ENCODE measurements at regions of chr11 and their contacts with region 1.

Region 1: DNA sequence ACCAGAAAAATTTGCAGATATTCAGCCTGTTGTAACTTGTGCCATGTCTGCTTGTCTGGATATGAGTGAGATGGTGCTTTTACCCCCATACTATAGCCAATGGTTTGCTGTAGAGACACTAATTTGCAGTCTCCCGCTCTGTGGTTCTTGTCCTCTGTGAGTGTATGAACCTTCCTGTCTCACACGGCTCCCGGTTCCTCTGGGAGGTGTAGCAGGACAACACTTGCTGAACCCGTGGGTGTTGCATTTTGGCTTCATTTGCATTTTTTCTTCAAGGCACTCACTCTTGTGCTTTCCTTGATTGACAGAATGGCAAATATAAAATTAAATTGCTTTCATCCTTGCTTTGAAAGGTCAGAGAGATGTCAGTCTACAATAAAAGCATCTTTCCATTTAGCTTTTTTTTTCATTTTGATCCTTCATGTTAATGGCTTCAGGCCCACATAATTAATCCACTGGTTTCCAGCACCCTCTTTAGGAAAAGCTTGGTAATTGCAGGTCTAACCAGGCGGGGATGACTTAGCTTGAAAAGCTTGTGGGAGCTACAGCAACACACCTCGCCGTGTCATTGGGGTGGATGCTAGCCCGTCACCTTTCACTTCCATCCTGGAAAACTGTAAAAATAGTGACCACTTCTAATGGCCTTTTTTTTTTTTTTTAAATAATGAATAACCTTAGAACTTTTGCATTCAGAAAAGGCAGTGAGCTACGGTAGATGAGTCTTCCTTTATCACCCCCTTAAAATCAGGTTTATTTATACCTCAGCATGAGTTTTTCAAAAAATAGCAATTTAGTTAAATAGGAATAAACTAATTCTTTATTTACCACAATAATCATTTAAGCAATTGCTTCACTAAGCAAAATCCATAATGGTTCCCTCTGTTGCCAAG is 27.4 kb upstream of the ST14 start:
- DNase-seq: peak; percentile 10 to 64 (median 51)
- H3K4me3 ChIP-seq: no peak overlapping the region
- H3K4me3 Mint-ChIP-seq: no peak overlapping the region
- H3K27ac ChIP-seq: no peak overlapping the region
- H3K27ac Mint-ChIP-seq: peak overlapping the region in 1 of 8 donors; percentile 2
- H3K4me1 ChIP-seq: no peaks in the 10 kb centered on the region
- H3K4me1 Mint-ChIP-seq: no peaks in the 10 kb centered on the region
- H3K27me3 ChIP-seq: no peaks in the 10 kb centered on the region
- H3K27me3 Mint-ChIP-seq: no peaks in the 10 kb centered on the region

Region 2: DNA sequence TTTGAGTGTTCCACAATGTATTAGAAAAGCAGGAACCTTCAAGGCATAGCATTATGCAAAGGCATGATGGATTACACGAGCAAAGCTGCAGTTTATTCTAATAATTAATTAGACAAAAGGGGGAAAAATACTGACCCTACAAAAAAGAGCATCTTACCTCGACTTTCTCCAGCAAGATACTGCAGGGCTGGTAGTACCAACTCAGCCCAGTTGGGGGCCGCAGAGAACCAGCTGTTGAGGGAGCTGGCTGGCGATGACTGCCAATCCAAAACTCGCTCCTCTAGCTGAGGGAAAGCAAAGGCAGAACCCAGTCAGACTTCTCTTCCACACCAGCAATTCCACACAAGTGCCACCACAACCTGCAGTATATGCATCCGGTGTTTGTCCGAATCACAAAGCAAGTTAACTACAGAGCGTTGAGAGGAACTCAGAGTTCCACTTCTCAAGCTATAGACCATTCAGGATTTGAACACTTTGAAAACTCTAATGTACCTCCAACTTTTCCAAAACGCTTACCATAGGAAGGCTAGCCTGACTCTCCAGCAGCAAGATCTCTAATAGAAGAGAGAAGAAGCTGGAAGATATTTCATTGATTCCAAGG is 250.5 kb before region 1 on chr11:
- CTCF ChIA-PET with region 1: interaction called, 19 read pairs
- POLR2A ChIA-PET with region 1: no interaction called
- DNase-seq: peak in 1 of 5 donors; percentile 37
- H3K4me3 ChIP-seq: no peak overlapping the region
- H3K4me3 Mint-ChIP-seq: no peak overlapping the region
- H3K27ac ChIP-seq: no peak overlapping the region
- H3K27ac Mint-ChIP-seq: peak overlapping the region in 1 of 8 donors; percentile 88
- H3K4me1 ChIP-seq: no peaks in the 10 kb centered on the region
- H3K4me1 Mint-ChIP-seq: peaks cover 0 to 5% (median 2%) of the 10 kb centered on the region in 3 donors
- H3K27me3 ChIP-seq: no peaks in the 10 kb centered on the region
- H3K27me3 Mint-ChIP-seq: no peaks in the 10 kb centered on the region

Region 3: DNA sequence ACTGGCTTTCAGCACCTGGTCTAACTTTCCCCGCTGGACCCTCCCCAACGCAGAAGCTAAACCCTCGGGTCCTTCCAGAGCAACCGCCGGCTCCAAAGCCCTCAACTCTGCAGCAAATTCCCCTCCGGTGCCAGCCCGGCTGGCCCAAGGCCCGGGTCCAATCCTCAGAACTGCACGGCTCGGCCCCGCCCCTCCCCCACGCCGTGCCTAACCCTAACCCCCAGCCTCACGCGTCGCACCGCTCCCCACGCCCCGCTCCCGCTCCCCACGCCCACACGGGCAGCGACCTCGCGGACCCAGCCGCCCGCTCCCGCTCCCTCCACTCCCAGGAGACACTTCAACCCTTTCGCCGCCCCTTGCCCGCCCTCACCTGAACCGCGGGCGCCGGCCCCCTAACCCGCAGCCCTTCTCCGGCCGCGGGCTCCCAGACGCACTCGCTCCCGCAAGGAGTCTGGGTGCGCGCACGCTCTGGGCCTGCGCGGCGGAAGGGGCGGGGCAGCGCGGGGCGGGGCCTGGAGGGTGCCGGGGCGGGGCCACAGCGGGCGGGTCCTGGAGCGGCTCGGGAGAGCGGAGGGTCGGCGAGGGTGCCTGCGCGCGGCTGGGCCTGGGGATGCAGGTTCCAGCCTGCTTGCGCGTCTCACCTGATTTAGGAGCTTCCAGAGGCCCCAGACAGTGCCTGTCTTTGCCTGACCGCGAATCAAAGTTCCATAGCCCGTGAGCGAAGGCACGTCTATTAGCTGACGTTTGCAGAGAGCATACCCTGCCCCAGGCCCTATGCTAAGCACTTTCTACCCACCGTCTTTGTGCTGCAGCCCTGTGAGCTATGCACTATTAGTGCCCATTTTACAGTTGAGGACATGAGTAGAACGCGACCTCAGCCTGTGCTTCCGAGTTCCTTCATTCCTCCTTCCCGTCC is 236.8 kb before region 1 on chr11 and contains the start of gene NFRKB:
- CTCF ChIA-PET with region 1: interaction called, 15 read pairs
- POLR2A ChIA-PET with region 1: no interaction called
- DNase-seq: peak; percentile 79 to 89 (median 85)
- H3K4me3 ChIP-seq: peak within 1 kb of the TSS; percentile 91
- H3K4me3 Mint-ChIP-seq: peak within 1 kb of the TSS; percentile 90 to 96 (median 93)
- H3K27ac ChIP-seq: peak within 1 kb of the TSS; percentile 65
- H3K27ac Mint-ChIP-seq: peak within 1 kb of the TSS; percentile 79 to 97 (median 91)
- H3K4me1 ChIP-seq: peaks cover 20% of the 10 kb centered on the region
- H3K4me1 Mint-ChIP-seq: peaks cover 35 to 50% (median 44%) of the 10 kb centered on the region in 3 donors
- H3K27me3 ChIP-seq: no peaks in the 10 kb centered on the region
- H3K27me3 Mint-ChIP-seq: peaks cover 0 to 2% of the 10 kb centered on the region in 2 donors
- total RNA-seq, gene NFRKB: 37.5 to 37.8 TPM

Region 4: DNA sequence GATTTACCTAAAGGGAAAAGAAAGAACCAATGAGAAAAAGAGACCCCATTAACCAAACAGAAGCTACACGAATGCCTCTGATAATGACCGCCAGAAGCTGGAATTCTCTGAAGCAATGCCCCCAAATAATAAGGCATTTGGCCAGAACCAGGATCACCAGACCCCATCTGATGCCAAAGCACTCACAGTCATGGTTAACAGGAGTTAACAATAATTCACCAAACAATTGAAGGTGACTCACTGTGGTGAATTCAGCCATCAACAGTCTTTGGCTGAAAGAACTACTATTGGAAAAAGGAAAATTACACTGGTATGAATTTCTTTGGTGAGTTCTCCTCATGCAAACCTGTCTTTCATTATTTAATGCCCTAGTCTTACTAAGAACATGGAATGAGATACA is 215.0 kb before region 1 on chr11:
- CTCF ChIA-PET with region 1: interaction called, 159 read pairs
- POLR2A ChIA-PET with region 1: no interaction called
- DNase-seq: no peak
- H3K4me3 ChIP-seq: no peak overlapping the region
- H3K4me3 Mint-ChIP-seq: no peak overlapping the region
- H3K27ac ChIP-seq: no peak overlapping the region
- H3K27ac Mint-ChIP-seq: no peak overlapping the region
- H3K4me1 ChIP-seq: no peaks in the 10 kb centered on the region
- H3K4me1 Mint-ChIP-seq: no peaks in the 10 kb centered on the region
- H3K27me3 ChIP-seq: no peaks in the 10 kb centered on the region
- H3K27me3 Mint-ChIP-seq: peaks cover 0 to 3% of the 10 kb centered on the region in 2 donors

Region 5: DNA sequence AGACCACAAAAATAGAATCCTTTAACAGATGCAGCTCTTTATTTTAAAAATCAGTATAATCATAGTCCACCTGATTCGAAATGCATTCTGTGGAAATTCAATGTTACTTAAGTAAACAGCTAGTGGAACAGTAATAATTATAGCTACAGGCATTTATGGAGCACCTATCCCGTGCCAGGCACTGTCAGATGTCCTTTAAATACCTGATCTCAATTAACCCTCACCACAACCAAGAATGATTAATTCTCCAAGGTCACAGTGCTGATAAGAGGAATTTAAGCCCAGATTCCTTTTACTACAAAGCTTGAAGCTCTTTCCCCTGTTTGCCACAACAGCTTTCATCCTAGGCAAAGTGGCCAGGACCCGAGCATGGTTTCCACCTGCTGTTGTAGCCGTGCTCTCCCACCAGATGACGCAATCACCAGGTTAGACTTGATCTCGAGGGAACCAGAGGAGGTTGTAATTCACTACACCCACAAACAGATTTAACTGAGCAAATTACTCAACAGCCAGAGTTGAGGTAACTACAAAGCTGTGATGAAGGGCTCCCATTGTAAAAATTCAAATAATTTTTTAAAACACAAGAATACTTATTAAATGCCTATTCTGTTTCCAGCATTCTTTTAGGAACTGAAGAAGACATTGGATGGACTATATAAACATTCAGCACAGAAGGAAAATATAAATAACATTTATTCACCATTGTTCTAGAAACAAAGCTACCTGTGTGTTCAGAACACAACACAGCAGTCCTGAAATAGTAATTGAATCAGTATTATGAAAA is 139.9 kb before region 1 on chr11:
- CTCF ChIA-PET with region 1: interaction called, 19 read pairs
- POLR2A ChIA-PET with region 1: no interaction called
- DNase-seq: peak in 3 of 5 donors; percentile 11 to 53 (median 35)
- H3K4me3 ChIP-seq: no peak overlapping the region
- H3K4me3 Mint-ChIP-seq: no peak overlapping the region
- H3K27ac ChIP-seq: no peak overlapping the region
- H3K27ac Mint-ChIP-seq: peak overlapping the region in 2 of 8 donors; percentile 47 to 61
- H3K4me1 ChIP-seq: no peaks in the 10 kb centered on the region
- H3K4me1 Mint-ChIP-seq: peaks cover 14 to 35% (median 29%) of the 10 kb centered on the region in 3 donors
- H3K27me3 ChIP-seq: no peaks in the 10 kb centered on the region
- H3K27me3 Mint-ChIP-seq: no peaks in the 10 kb centered on the region

Region 6: GRCh38 chr11:130002846-130003716 is 129.1 kb before region 1 on chr11:
- CTCF ChIA-PET with region 1: interaction called, 18 read pairs
- POLR2A ChIA-PET with region 1: interaction called, 10 read pairs
- DNase-seq: peak; percentile 81 to 96 (median 95)
- H3K4me3 ChIP-seq: peak overlapping the region; percentile 87
- H3K4me3 Mint-ChIP-seq: peak overlapping the region; percentile 93 to 100 (median 99)
- H3K27ac ChIP-seq: peak overlapping the region; percentile 99
- H3K27ac Mint-ChIP-seq: peak overlapping the region; percentile 98 to 100 (median 100)
- H3K4me1 ChIP-seq: peaks cover 20% of the 10 kb centered on the region
- H3K4me1 Mint-ChIP-seq: peaks cover 33 to 46% (median 40%) of the 10 kb centered on the region in 3 donors
- H3K27me3 ChIP-seq: no peaks in the 10 kb centered on the region
- H3K27me3 Mint-ChIP-seq: no peaks in the 10 kb centered on the region

Region 7: GRCh38 chr11:130145975-130146776 is 14.0 kb after region 1 on chr11:
- CTCF ChIA-PET with region 1: interaction called, 10 read pairs
- POLR2A ChIA-PET with region 1: no interaction called
- DNase-seq: peak in 1 of 5 donors; percentile 11
- H3K4me3 ChIP-seq: no peak overlapping the region
- H3K4me3 Mint-ChIP-seq: peak overlapping the region in 3 of 7 donors; percentile 33 to 64 (median 62)
- H3K27ac ChIP-seq: no peak overlapping the region
- H3K27ac Mint-ChIP-seq: peak overlapping the region in 7 of 8 donors; percentile 27 to 96 (median 79)
- H3K4me1 ChIP-seq: peaks cover 9% of the 10 kb centered on the region
- H3K4me1 Mint-ChIP-seq: peaks cover 11 to 19% (median 12%) of the 10 kb centered on the region in 3 donors
- H3K27me3 ChIP-seq: no peaks in the 10 kb centered on the region
- H3K27me3 Mint-ChIP-seq: peaks cover under 1 to 2% of the 10 kb centered on the region in 2 donors